A673 (cell line): ENCODE measurements at regions of chr19 and their contacts with region 1.

Region 1: DNA sequence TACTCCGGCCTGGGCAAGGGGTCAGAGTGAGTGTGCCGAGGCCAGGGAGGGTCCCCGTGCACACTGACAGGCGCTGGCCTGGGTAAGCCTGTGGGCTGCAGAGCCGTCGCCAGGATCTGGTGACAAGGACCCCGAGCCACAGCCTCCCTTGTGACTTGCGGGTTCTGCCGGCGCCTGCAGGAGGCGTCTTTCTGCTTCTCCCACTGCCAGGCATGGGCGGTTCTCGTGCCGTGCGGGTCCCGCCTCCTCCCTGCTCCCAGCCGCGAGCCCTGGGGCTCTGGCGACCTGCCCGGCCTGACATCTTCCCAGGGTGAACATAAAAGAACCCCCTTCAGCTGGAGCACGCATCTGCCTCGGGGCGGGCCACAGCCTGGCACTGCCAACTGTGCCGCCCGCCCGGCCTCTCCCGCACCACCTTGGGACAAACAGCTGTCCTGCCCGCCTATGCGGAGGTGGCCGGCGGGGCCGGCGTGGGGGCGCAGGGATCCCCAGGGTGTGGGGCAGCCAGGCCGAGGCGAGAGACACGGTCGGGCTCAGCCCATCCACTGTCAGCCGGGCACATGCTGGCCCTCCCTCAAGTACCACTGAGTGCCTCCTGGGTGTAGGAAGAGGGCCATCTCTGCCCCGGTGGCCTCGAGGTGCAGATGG is 1.5 kb upstream of the HCN2 start:
- DNase-seq: peak; percentile 97
- H3K4me3 ChIP-seq: peak overlapping the region; percentile 18
- H3K27ac ChIP-seq: peak overlapping the region; percentile 49
- H3K4me1 ChIP-seq: peaks cover 23% of the 10 kb centered on the region
- H3K27me3 ChIP-seq: no peaks in the 10 kb centered on the region
- CTCF ChIP-seq: peak; percentile 88

Region 2: DNA sequence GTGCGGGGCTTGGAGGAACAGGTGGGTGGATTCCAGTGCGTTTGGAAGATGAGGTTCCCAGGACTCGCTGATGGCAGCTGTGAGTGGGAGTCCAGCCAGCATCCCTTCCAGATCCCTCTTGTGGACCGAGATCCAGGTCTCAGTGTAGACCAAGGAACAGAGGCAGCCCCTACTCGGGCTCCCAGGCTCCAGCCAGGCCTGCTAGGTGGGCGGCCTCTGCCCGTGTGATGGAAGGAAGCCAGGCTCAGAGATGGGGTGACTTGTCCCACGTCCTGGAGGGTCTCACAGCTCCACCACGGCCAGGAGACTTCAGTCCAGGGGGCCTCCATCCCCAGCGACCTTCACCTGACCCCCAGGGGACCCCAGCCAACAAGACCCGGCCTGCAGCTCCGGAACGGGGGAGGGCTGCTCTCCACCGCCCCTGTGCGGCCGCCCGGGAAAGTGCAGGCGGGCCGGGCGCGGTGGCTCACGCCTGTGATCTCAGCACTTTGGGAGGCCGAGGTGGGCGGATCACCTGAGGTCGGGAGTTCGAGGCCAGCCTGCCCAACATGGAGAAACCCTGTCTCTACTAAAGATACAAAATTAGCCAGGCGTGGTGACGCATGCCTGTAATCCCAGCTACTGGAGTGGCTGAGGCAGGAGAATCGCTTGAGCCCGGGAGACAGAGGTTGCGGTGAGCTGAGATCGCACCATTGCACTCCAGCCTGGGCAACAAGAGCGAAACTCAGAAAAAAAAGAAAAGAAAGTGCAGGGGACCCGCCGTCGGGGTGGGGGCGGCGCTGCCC is 92.6 kb before region 1 on chr19:
- CTCF ChIA-PET with region 1: no interaction called
- POLR2A ChIA-PET with region 1: no interaction called
- intact Hi-C with region 1: no loop called
- DNase-seq: peak; percentile 77
- H3K4me3 ChIP-seq: no peak overlapping the region
- H3K27ac ChIP-seq: no peak overlapping the region
- H3K4me1 ChIP-seq: no peaks in the 10 kb centered on the region
- H3K27me3 ChIP-seq: peaks cover 15% of the 10 kb centered on the region
- CTCF ChIP-seq: peak; percentile 78

Region 3: DNA sequence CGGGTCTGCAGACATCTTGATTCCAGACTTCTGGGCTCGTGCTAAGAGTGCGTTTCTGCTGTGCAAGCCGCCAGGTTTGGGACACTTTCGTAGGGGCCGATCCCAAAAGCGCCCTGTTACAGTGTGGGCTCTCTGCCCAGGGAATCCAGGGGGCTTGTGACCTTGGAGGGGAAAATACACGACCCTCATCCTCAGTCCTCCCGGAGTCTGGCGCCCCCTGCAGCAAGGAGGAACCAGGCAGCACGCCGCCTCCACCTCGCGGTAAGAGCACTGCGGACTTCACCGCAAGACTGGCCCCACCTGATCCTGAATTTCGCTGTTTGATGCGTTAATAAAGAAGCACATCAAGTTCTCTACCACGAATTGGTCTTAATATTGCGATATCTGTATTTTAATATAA is 39.9 kb after region 1 on chr19:
- CTCF ChIA-PET with region 1: no interaction called
- POLR2A ChIA-PET with region 1: no interaction called
- intact Hi-C with region 1: loop called (anchors 5 kb)
- DNase-seq: peak; percentile 40
- H3K4me3 ChIP-seq: no peak overlapping the region
- H3K27ac ChIP-seq: no peak overlapping the region
- H3K4me1 ChIP-seq: no peaks in the 10 kb centered on the region
- H3K27me3 ChIP-seq: no peaks in the 10 kb centered on the region
- CTCF ChIP-seq: peak; percentile 77

Region 4: GRCh38 chr19:732148-733069 is 144.2 kb after region 1 on chr19:
- CTCF ChIA-PET with region 1: interaction called, 4 read pairs
- POLR2A ChIA-PET with region 1: no interaction called
- intact Hi-C with region 1: loop called (anchors 5 kb)
- DNase-seq: no peak
- H3K4me3 ChIP-seq: no peak overlapping the region
- H3K27ac ChIP-seq: no peak overlapping the region
- H3K4me1 ChIP-seq: no peaks in the 10 kb centered on the region
- H3K27me3 ChIP-seq: no peaks in the 10 kb centered on the region
- CTCF ChIP-seq: no peak

Region 5: GRCh38 chr19:933216-933882 is 345.1 kb after region 1 on chr19:
- CTCF ChIA-PET with region 1: no interaction called
- POLR2A ChIA-PET with region 1: no interaction called
- intact Hi-C with region 1: no loop called
- DNase-seq: no peak
- H3K4me3 ChIP-seq: no peak overlapping the region
- H3K27ac ChIP-seq: no peak overlapping the region
- H3K4me1 ChIP-seq: no peaks in the 10 kb centered on the region
- H3K27me3 ChIP-seq: no peaks in the 10 kb centered on the region
- CTCF ChIP-seq: no peak